ENCODE measurements at regions of chr3 and their contacts with region 1.

Region 1: DNA sequence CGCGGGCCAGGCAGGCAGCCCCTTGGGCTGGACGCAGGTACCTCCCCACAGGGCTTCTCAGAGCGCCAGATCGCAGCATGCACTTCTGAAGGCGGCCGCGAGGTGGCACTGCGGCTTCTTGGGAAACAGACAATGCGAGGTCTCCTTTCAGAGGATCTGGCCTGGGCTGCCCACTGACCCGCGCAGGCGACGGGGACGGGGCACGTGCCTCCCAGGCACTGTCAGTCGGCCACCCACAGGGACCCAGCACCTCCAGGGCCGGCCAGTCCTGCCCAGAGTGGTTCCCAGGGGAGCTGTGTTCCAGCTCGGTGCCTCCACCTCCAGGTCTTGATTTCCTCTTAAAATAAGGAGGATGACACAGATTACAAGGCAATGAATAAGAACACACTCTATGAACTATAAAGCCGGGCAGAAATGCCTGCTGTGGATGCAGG is 24.4 kb upstream of the TXNRD3 start:
- DNase-seq: no peak
- H3K4me3 ChIP-seq: peak overlapping the region; percentile 35; the same call in 1 of the 2 replicates
- CTCF ChIP-seq: peak; percentile 97

Region 2: DNA sequence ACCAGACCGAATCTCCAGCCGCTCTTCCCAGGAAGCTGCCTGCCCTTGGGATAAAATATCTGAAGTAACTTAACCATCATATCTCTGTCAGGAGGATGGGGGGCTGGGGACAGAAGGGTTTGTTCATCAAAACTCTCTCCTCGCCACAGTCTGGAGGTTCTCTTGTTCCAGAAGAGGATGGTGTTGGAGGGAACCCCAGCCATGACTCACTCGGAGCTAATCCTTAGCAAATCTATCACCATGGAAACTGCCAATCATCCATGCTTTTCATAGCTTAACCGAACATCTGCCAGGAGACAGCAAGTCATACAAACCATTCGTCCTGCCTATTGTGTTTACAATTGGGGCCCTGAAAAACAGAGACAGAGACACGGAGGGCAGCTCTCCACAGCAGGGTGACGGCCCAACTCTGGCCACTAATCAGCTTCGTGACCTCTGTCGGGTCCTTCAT is 1549.8 kb before region 1 on chr3:
- CTCF ChIA-PET with region 1: no interaction called
- POLR2A ChIA-PET with region 1: no interaction called
- DNase-seq: peak; percentile 96
- H3K4me3 ChIP-seq: no peak overlapping the region
- CTCF ChIP-seq: no peak

Region 3: GRCh38 chr3:126654571-126655383 is 24.6 kb before region 1 on chr3 and contains the start of gene TXNRD3:
- CTCF ChIA-PET with region 1: interaction called, 29 read pairs
- POLR2A ChIA-PET with region 1: no interaction called
- DNase-seq: no peak
- H3K4me3 ChIP-seq: peak within 1 kb of the TSS; percentile 68
- CTCF ChIP-seq: no peak

Region 4: GRCh38 chr3:126668450-126669401 is 10.6 kb before region 1 on chr3:
- CTCF ChIA-PET with region 1: interaction called, 19 read pairs
- POLR2A ChIA-PET with region 1: no interaction called
- DNase-seq: no peak
- H3K4me3 ChIP-seq: no peak overlapping the region
- CTCF ChIP-seq: no peak

Region 5: DNA sequence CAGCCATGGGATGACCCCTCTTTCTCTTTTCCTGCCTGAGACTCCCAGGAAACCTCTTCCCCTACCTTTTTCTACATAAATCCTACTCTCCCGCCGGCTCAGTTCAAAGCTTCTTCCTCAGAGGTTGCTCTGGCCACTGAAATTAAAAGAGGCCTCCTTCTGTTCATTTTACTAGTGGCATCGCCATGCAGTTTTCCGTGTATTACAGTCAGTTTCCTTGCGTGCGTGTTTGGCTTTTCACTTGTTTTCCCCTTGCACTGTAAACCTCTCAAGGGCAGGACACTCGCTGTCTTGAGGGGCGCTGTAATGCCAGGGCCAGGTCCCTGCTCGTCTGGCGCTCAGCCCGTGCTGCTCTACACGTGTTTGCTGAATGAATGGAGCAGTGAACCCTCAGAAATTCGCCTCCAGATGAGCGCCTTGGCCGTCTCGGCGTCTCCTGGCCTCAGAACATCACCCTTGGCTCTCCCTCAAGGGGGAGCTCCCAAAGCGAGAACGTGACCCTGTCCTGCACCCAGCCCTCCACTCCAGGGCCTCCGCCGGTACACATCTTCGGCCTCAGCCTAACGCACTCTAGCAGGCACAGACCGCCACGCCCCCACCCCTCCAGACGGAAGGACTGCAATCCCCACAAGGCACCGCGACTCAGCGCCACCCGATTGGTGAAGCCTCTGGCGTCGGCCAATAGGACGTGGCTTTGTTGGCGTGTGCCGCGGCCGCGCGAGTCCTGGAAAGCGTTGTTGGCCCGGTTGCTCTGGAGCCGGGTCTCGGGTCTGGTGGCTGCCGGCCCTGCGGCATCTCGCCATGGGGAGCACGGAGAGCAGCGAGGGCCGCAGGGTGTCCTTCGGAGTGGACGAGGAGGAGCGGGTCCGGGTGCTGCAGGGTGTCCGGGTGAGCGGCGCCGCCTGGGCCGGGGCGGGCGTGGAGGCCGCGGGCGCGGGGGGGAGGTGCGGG is 24.5 kb after region 1 on chr3 and contains the start of gene CHCHD6:
- CTCF ChIA-PET with region 1: interaction called, 19 read pairs
- POLR2A ChIA-PET with region 1: no interaction called
- DNase-seq: peak; percentile 71
- H3K4me3 ChIP-seq: peak within 1 kb of the TSS; percentile 66
- CTCF ChIP-seq: peak; percentile 26

Region 6: GRCh38 chr3:126982471-126983175 is 303.3 kb after region 1 on chr3 and contains the start of gene PLXNA1:
- CTCF ChIA-PET with region 1: interaction called, 28 read pairs
- POLR2A ChIA-PET with region 1: no interaction called
- DNase-seq: no peak
- H3K4me3 ChIP-seq: peak within 1 kb of the TSS; percentile 69
- CTCF ChIP-seq: peak; percentile 99

Region 7: GRCh38 chr3:127544192-127544802 is 865.0 kb after region 1 on chr3:
- CTCF ChIA-PET with region 1: interaction called, 113 read pairs
- POLR2A ChIA-PET with region 1: no interaction called
- DNase-seq: peak; percentile 7
- H3K4me3 ChIP-seq: no peak overlapping the region
- CTCF ChIP-seq: peak; percentile 84

Measured in AG04449 (cell line).